ENCODE measurements at regions of chr1 and their contacts with region 1.

Region 1: DNA sequence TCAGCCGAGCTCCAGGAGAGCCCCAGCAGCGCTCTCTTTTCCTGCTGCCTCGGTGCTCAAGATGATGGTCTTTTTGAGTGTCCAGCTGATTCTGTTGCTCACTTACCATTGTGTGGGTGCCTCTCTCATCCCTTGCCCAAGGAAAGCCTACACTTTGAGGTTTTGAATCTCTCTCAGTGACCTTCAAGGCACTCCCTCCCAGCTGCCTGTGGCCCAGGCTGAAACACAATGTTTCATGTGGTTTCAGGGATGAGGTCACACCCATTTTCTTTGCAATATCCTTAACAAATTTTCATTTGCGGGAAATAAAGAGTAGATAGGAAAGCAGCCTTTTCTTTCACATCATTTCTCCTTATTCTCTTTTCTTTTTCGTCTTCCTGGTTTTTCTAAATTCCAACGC is 12.6 kb upstream of the MRPS14 start:
- DNase-seq: no peak
- H3K4me3 ChIP-seq: no peak overlapping the region
- H3K27ac ChIP-seq: no peak overlapping the region
- H3K4me1 ChIP-seq: no peaks in the 10 kb centered on the region
- H3K27me3 ChIP-seq: no peaks in the 10 kb centered on the region
- CTCF ChIP-seq: no peak

Region 2: DNA sequence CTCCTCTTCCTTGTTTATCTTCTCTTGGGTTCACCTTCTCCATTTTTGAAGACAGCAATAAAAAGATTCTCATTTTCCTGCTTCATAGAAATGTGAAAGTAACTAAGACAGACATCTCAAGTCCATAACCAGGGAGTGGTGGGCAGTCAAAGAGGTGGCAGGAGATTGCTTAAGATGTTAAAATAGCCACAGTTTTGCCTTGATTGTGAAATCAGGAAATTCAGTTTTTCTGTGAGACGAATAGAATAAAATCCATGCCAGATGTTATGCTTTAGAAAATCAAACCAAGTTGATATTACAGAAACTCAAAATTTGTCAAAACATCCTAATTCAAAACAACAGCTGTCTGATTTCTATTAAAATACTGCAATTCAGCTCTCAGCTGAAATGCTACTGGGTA is 89.0 kb after region 1 on chr1:
- intact Hi-C with region 1: loop called (anchors 5 kb)
- DNase-seq: no peak
- H3K4me3 ChIP-seq: peak overlapping the region; percentile 28
- H3K27ac ChIP-seq: peak overlapping the region; percentile 65
- H3K4me1 ChIP-seq: peaks cover 24% of the 10 kb centered on the region
- H3K27me3 ChIP-seq: no peaks in the 10 kb centered on the region
- CTCF ChIP-seq: no peak